PC-9 (cell line): ENCODE measurements at regions of chr5 and their contacts with region 1.

Region 1: DNA sequence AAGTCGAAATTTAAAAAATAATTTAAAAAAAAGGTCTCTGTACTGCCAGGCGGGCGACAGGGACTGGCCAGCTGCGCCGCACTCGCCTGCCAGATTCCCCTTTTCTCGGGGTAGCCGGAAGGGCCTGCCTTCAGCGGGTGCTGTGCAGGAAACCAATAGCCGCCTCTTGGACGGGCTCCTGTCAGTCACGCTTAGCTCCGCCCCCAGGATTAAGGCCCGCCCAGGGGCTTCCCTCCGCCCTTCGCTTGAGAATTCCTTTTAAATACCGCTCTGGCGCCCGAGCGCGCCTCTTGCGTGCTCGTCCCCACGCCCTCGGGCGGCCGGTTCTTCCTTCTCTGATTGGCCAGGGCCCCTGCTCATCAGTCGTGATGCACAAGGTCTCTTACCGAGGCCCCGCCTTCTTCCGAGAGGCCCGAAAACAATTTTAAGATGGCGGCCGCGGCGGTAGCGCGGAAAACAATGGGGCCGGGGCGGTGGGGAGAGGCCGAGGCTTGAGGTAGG is at the start of gene MAML1:
- DNase-seq: peak; percentile 98 to 100
- H3K4me3 ChIP-seq: peak within 1 kb of the TSS; percentile 77
- H3K27ac ChIP-seq: peak within 1 kb of the TSS; percentile 74
- H3K4me1 ChIP-seq: peaks cover 39% of the 10 kb centered on the region
- H3K27me3 ChIP-seq: no peaks in the 10 kb centered on the region
- CTCF ChIP-seq: no peak
- total RNA-seq, gene MAML1: 25.7 and 34.0 TPM in 2 replicates

Region 2: GRCh38 chr5:179550511-179551230 is 181.8 kb before region 1 on chr5 and contains the start of gene RUFY1:
- CTCF ChIA-PET with region 1: no interaction called
- POLR2A ChIA-PET with region 1: interaction called, 13 read pairs
- intact Hi-C with region 1: no loop called
- DNase-seq: peak; percentile 58 to 91
- H3K4me3 ChIP-seq: peak within 1 kb of the TSS; percentile 100
- H3K27ac ChIP-seq: peak within 1 kb of the TSS; percentile 75
- H3K4me1 ChIP-seq: peaks cover 33% of the 10 kb centered on the region
- H3K27me3 ChIP-seq: no peaks in the 10 kb centered on the region
- CTCF ChIP-seq: no peak
- total RNA-seq, gene RUFY1: 63.9 and 72.2 TPM in 2 replicates

Region 3: GRCh38 chr5:179668391-179668790 is 64.1 kb before region 1 on chr5:
- CTCF ChIA-PET with region 1: no interaction called
- POLR2A ChIA-PET with region 1: interaction called, 10 read pairs
- intact Hi-C with region 1: no loop called
- DNase-seq: no peak
- H3K4me3 ChIP-seq: no peak overlapping the region
- H3K27ac ChIP-seq: no peak overlapping the region
- H3K4me1 ChIP-seq: no peaks in the 10 kb centered on the region
- H3K27me3 ChIP-seq: no peaks in the 10 kb centered on the region
- CTCF ChIP-seq: peak; percentile 61

Region 4: DNA sequence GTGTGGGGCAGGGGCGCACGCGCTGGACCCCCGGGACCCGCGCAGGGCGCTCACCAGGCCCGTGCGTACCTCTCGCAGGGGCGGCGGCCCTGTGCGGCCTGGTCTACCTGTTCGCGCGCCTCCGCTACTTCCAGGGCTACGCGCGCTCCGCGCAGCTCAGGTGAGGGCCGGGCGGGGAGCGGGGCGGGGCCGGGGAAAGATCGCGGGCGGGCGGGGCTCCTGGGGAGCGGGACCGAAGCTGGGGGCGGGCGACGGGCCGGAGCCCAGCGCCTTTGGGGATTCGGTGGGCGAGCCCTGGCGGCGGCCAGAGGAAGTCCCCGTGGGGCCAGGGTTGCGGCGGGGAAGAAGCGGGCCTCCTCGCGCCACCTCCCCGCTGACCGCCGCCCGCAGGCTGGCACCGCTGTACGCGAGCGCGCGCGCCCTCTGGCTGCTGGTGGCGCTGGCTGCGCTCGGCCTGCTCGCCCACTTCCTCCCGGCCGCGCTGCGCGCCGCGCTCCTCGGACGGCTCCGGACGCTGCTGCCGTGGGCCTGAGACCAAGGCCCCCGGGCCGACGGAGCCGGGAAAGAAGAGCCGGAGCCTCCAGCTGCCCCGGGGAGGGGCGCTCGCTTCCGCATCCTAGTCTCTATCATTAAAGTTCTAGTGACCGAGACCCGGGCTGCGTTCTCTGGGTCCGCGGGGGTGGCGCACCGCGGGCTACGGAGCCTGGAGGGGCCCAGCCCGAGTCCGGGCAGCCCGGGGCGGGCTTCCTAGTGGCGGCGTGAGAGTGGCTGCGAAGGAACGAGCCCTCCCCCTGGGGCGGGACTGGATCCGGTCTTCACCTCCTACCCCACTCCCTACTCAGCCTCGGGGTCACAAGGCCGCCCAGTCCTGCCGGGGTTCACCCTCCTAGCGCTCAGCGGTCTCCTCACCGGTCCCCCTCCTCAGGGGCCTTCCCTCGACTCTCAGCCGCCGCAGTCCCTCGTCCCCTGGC is 63.7 kb after region 1 on chr5:
- CTCF ChIA-PET with region 1: no interaction called
- POLR2A ChIA-PET with region 1: no interaction called
- intact Hi-C with region 1: loop called (anchors 2 kb)
- DNase-seq: peak; percentile 66 to 93
- H3K4me3 ChIP-seq: peak overlapping the region; percentile 86
- H3K27ac ChIP-seq: peak overlapping the region; percentile 65
- H3K4me1 ChIP-seq: peaks cover 17% of the 10 kb centered on the region
- H3K27me3 ChIP-seq: no peaks in the 10 kb centered on the region
- CTCF ChIP-seq: peak; percentile 54; the same call in 1 of the 2 replicates

Region 5: DNA sequence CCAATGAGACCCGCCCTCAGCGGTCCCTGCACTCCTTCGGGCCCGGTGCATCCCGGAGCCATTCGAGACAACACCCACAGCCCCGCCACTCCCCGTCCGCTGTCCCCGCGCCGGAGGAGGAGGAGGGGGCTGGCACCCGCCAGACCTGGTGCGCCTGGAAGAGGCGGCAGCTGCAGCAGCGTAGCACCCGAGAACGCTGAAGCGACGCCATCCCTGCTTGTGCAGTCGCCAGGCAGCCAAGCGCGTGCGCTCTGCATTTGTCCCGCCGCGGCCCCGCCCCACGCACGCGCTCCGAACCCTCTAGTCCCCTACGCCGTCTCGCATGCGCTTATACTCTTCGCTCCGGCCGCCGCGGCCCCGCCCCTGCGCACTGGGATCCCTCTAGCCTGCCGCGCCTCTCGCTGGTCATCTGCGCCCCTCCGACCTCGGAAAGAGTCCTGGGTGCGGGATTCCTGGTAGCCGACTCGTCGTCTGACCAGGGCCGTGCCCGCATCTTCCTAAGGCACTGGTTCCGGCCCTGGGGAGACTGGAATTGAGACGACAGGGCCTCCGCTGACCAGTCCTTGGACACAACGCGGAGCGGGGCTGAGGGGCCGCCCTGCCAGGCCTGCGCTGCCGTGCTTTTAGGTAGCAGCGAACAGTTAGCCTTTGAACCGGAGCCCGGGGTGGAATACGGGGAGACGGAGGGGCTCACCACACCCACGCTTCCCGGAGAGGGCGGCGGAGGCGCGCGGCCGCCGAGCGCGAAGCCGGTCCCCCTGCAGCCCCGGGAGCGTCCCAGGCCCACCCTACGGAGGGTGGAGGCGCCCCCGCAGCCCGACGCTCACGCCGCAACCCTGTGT is 126.3 kb after region 1 on chr5 and contains the start of gene MRNIP:
- CTCF ChIA-PET with region 1: no interaction called
- POLR2A ChIA-PET with region 1: no interaction called
- intact Hi-C with region 1: loop called (anchors 10 kb)
- DNase-seq: peak; percentile 85 to 98
- H3K4me3 ChIP-seq: peak within 1 kb of the TSS; percentile 83
- H3K27ac ChIP-seq: peak within 1 kb of the TSS; percentile 43; the same call in 1 of the 2 replicates
- H3K4me1 ChIP-seq: peaks cover 6% of the 10 kb centered on the region; the same call in 1 of the 2 replicates
- H3K27me3 ChIP-seq: no peaks in the 10 kb centered on the region
- CTCF ChIP-seq: no peak
- total RNA-seq, gene MRNIP: 39.9 and 54.0 TPM in 2 replicates

Region 6: GRCh38 chr5:181191529-181192394 is 1459.3 kb after region 1 on chr5:
- CTCF ChIA-PET with region 1: no interaction called
- POLR2A ChIA-PET with region 1: no interaction called
- intact Hi-C with region 1: loop called (anchors 5 kb)
- DNase-seq: peak; percentile 87 to 97
- H3K4me3 ChIP-seq: peak overlapping the region; percentile 98
- H3K27ac ChIP-seq: peak overlapping the region; percentile 40; the same call in 1 of the 2 replicates
- H3K4me1 ChIP-seq: peaks cover 13% of the 10 kb centered on the region; the same call in 1 of the 2 replicates
- H3K27me3 ChIP-seq: no peaks in the 10 kb centered on the region
- CTCF ChIP-seq: no peak